Right ventricle myocardium inferior (tissue), 1 donor: ENCODE measurements at regions of chr16 and their contacts with region 1.

Region 1: DNA sequence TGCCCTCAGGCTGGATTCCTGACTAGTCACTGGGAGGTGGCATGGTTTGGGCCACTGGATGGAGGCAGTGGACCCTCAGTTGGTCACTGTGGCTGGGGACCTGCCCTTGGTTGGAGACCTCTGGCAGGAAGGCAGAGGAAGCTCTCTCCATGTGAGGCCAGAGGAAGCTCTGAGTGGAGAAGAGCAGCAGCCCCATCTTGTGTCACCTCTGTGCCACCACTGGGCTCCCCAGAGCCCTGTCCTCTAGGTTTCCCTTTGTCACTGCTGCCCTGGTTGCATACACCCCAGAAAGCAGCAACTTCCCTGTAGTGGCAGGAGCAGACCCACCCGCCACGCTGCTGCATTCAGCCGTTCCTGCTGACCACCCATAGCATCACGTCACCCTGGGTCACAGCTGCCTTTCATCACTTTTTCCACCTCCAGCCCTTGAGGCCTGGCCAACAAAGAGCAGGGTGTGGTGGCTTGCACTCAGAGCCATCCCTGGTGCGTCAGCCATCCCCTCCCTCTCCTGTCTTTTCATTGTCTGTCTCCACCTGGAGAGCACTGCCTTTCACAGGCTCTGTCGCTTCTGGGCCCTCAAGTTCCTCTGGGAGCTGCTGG is 11.9 kb downstream of the CTRL start:
- DNase-seq: no peak
- ATAC-seq: no peak

Region 2: DNA sequence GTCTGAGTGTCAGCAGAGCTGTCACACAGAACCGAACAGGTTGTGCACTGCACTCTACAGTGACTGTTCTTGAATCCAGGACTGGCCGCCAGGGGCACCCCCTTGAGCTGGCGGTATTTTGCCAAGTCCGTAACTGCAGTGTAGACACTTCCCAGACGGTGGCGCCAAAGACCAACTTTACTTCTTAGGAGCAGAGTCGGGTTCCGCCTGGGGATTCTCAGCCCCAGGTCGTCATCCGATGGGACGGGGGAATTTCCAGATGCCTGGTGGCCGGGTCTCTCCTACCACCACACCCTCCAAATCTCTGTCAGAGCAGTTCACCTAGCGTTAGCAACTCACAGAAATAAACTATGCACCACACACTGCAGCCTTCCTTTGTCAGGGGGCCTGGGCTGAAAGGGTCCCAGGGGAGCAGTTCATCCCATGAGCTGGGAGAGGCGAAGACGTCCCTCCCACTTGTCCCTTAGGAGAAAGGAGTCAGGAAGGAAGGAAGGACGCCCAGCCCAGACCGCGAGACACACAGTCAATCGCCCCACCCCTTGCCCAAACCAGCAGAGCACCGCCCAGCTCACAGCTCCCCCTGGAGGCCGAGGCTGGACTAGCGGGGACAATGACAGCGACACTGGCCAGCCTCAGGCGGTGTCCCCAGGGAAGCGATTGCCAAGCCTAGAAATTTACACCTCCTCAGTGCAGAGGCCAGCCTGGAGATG is 398.5 kb before region 1 on chr16:
- intact Hi-C with region 1: no loop called
- DNase-seq: peak; percentile 97
- ATAC-seq: peak; percentile 94

Region 3: GRCh38 chr16:67825119-67825518 is 94.6 kb before region 1 on chr16:
- intact Hi-C with region 1: loop called (anchors 5 kb)
- DNase-seq: no peak
- ATAC-seq: no peak

Region 4: DNA sequence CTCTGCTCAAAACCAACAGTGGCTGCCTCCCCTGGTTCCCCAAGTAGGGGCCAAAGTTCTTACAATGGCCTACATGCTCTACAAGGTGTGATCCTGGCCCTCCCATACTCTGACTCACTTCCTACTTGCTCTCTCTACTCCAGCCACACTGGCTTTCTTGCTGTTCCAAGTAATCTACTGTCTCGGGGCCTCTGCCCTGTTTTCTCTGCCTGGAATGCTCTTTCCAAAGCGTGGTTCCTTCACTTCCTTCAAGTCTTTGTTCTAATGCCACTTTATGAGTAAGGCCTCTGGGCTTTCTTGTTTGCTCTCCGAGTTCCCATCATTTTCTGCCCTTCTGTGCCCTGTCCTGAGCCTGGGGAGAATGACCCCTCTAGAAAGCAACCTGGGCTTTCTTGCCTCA is 721.2 kb after region 1 on chr16:
- intact Hi-C with region 1: no loop called
- DNase-seq: no peak
- ATAC-seq: no peak